ENCODE measurements at regions of chr20 and their contacts with region 1.

Region 1: DNA sequence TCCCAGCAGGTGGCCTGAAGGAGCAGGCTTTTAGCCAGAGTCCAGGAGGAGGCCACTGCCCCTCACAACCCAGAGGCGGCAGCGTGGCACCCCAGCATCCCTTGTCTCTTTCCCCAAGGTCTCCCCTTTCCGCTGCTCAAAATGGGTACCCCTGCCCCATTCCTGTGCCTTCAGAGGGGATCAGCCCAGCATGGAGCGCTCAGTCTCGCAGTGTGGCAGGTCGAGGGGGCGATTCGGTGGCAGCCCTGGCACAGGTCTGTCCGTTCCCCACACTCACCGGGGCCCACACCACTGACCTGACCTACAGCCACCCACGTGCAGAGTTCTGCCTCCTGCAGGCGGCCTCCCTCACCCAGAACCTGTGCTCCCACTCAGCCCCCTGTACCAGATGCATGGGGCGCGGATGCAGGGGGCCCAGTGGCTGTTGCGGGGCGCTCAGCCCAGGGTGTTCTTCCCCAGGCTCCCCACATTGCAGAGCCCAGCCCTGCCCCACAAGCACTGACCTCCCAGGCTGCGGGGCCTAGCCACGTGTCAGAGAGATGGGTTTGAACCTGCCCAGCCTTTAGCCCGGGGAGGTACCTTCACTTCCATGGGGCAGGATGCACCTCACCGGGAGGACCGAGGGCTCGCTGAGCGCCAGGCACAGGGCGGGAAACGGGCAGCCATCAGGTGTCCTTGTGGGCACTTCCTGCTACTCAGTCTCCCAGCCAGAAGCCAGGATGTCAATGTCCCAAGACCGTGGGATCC is 41.8 kb downstream of the DSTN start:
- DNase-seq: peak in 1 of 2 experiments; percentile 70
- H3K4me3 ChIP-seq: no peak overlapping the region
- H3K27ac ChIP-seq: no peak overlapping the region
- H3K4me1 ChIP-seq: peaks cover 0 to 8% (median 1%) of the 10 kb centered on the region in 4 experiments; a peak in 3 of 7 replicates
- H3K27me3 ChIP-seq: no peaks in the 10 kb centered on the region
- CTCF ChIP-seq: peak; percentile 10 to 49 (median 38)
- EP300 ChIP-seq: no peak
- POLR2A ChIP-seq: peak in 1 of 2 experiments; percentile 20; a peak in 2 of 3 replicates
- RAD21 ChIP-seq: peak; percentile 14 to 46; a peak in 2 of 4 replicates

Region 2: DNA sequence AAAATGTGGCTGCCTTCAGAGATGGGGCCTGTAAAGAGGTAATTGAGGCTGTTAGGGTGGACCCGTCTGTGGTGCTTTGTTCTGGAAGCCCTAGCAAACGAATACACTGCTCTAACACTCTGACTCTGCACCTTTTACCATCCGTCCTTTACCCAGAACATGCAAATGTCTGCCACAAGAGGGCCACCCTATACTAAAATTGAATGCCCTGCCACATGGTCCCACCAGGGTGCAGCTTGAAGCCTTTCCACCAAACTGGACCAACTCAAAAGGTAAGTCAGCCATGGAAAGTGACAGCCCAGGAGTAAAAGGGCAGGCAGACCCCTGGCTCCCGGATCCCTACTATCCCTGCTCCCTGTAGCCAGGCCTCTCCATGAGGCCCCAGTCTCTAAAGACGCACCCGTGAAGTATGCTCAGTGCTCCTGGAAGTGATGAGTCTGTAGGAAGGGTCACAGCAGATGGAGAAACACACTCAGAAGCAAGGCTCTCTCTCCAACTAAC is 74.7 kb before region 1 on chr20:
- CTCF ChIA-PET with region 1: interaction called, 67 read pairs
- POLR2A ChIA-PET with region 1: interaction called, 6 read pairs
- DNase-seq: peak; percentile 71 to 78
- H3K4me3 ChIP-seq: no peak overlapping the region
- H3K27ac ChIP-seq: no peak overlapping the region
- H3K4me1 ChIP-seq: peaks cover 5 to 13% (median 8%) of the 10 kb centered on the region in 4 experiments; a peak in 6 of 7 replicates
- H3K27me3 ChIP-seq: no peaks in the 10 kb centered on the region
- CTCF ChIP-seq: peak; percentile 64 to 99 (median 98)
- EP300 ChIP-seq: no peak
- POLR2A ChIP-seq: no peak
- RAD21 ChIP-seq: peak; percentile 97

Region 3: DNA sequence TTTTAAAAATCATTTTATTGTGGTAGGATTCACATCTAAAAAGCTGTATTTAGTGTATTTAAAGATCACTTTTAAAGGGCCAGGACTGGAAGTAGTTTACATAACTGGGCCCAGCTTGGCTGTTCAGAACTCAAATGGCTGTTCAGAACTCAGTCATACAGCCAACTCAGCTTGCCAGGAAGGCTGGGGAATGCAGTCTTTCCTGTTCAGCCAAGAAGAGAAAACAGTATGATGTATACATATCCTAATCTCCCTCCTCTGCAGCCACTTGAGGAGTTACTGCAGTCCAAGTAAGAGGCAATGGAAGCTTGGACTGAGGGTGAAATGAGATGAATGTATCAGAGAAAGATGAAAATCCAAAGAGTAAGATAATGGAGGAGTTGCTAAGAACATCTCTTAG is 17.3 kb before region 1 on chr20:
- CTCF ChIA-PET with region 1: interaction called, 13 read pairs
- POLR2A ChIA-PET with region 1: interaction called, 4 read pairs
- DNase-seq: no peak
- H3K4me3 ChIP-seq: no peak overlapping the region
- H3K27ac ChIP-seq: no peak overlapping the region
- H3K4me1 ChIP-seq: peaks cover 0 to 18% (median 3%) of the 10 kb centered on the region in 4 experiments; a peak in 5 of 7 replicates
- H3K27me3 ChIP-seq: no peaks in the 10 kb centered on the region
- CTCF ChIP-seq: no peak
- EP300 ChIP-seq: no peak
- POLR2A ChIP-seq: no peak
- RAD21 ChIP-seq: no peak

Measured in H1 (cell line).